Tibial artery (tissue), 4 donors: ENCODE measurements at regions of chr6 and their contacts with region 1.

Region 1: GRCh38 chr6:6452002-6452401 is 131.5 kb upstream of the F13A1 start:
- DNase-seq: no peak
- H3K4me3 ChIP-seq: no peak overlapping the region
- H3K27ac ChIP-seq: no peak overlapping the region
- H3K4me1 ChIP-seq: peaks cover 0 to 20% (median 9%) of the 10 kb centered on the region in 4 donors
- H3K27me3 ChIP-seq: no peaks in the 10 kb centered on the region
- CTCF ChIP-seq: no peak

Region 2: DNA sequence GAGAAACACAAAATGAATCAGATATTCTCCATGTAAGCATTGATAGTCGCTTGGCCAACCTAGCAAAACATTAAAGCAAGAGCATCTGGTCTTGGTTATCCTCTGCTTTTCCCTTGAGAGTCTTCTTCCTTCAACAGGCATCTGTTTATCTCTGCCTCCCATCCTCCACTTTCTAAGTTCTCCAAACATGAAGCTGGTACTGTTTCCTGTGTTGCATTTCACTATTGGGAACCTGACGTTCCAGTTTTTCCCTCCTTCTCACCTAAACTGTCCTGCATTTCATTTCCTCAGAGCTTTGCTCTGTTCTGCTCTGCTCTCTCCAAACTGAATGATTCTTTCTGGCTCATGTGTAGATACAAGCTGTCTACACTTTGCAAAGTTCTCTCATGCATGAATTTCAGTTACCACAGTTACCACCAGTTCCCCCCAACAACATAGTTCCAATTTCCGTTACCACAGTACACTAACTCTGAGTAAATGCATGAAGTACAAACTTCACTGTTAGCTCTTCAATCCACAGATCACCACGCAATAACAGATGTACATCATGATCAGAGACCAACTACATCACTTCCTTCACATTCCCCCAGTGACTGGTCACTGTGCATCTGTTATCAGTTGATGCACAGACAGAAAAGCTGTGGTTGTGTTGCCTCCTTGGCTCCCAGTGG is 44.8 kb before region 1 on chr6:
- intact Hi-C with region 1: loop called (anchors 2 kb)
- DNase-seq: no peak
- H3K4me3 ChIP-seq: no peak overlapping the region
- H3K27ac ChIP-seq: peak overlapping the region in 1 of 2 donors; percentile 42
- H3K4me1 ChIP-seq: peaks cover 0 to 44% (median 16%) of the 10 kb centered on the region in 4 donors
- H3K27me3 ChIP-seq: no peaks in the 10 kb centered on the region
- CTCF ChIP-seq: no peak